ENCODE measurements at regions of chr3 and their contacts with region 1.

Region 1: DNA sequence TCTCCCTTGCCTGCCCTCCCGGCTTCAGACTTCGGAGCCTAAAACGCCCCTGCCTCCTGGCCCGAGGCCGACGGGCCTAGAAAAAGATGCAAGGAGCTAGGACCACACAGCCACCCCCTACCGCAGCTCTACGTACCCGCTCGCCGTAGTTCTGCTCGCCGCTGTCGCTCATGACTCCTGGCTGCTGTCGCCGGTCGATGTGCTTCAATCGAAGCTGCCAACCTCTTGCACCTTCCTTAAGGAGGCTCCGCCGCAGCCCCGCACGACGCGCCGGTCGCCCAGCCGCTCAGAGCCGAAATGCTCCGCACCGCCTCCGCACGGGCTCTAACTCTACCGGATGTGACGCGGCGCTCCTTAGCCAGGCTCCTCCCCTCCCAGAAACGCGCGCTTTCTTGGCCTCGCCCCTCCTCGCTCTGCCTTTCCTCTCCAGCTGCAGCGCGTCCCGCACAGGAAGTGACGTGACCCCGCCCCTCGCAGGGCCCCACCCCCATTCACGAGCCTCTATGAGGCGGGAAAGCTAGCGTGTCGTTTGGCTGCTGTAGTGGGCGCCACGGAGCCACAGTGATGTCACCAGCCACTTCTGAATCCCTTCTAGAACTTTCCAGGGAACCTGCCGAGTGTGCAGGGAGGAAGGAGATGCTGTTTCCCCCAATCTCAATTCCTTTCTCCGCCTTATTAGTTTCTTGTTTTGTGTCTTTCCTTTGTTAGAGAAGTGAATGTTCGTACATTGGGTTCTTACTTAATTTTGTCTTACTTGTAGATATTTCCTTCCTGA is at the start of gene TRA2B:
- DNase-seq: peak; percentile 99 to 100
- ATAC-seq: peak; percentile 96 to 98 (median 98)
- H3K4me3 ChIP-seq: peak within 1 kb of the TSS; percentile 99
- H3K27ac ChIP-seq: peak within 1 kb of the TSS; percentile 100
- H3K4me1 ChIP-seq: peaks cover 24% of the 10 kb centered on the region
- H3K27me3 ChIP-seq: no peaks in the 10 kb centered on the region
- CTCF ChIP-seq: peak; percentile 29
- total RNA-seq, gene TRA2B: 38.7 to 99.5 (median 68.8) TPM

Region 2: GRCh38 chr3:185852635-185853034 is 85.2 kb before region 1 on chr3:
- intact Hi-C with region 1: no loop called
- DNase-seq: no peak
- ATAC-seq: no peak
- H3K4me3 ChIP-seq: no peak overlapping the region
- H3K27ac ChIP-seq: no peak overlapping the region
- H3K4me1 ChIP-seq: no peaks in the 10 kb centered on the region
- H3K27me3 ChIP-seq: peaks cover 0 to 8% (median 2%) of the 10 kb centered on the region in 3 donors
- CTCF ChIP-seq: no peak

Region 3: GRCh38 chr3:186476044-186476468 is 538.2 kb after region 1 on chr3:
- intact Hi-C with region 1: no loop called
- DNase-seq: no peak
- ATAC-seq: no peak
- H3K4me3 ChIP-seq: no peak overlapping the region
- H3K27ac ChIP-seq: no peak overlapping the region
- H3K4me1 ChIP-seq: no peaks in the 10 kb centered on the region
- H3K27me3 ChIP-seq: no peaks in the 10 kb centered on the region
- CTCF ChIP-seq: no peak

Region 4: DNA sequence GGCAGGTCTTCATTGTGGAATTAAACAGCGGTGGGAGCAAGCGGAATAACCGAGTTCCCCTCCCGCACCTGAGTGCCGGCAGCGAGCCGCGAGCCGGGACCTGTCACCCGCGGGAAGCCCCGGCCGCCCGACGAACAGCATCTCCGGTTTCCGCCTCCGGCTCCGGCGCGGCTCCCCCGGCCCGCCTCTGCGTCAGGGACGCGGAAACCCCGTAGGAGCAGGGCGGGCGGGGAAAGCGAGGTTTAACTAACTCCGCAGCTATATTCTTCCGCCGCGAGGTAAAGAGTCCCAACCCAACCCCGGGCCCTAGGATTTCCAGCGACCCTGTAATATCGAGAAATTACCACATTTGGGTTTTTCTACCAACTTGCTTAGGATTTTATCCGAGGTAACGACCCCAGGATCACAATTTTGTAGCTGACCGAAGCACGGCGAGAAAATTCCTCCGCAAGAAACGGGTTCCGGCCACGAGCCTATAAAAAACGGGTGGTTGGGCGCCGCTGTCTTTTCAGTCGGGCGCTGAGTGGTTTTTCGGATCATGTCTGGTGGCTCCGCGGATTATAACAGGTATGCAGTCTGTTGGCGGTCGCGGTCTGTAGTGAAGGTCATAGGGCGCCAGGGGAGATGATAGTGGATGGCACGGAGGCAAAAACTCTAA is 845.3 kb after region 1 on chr3 and contains the start of gene EIF4A2:
- intact Hi-C with region 1: loop called in 1 of 2 experiments (anchors 5 kb)
- DNase-seq: peak; percentile 93 to 94
- ATAC-seq: peak; percentile 87 to 90 (median 88)
- H3K4me3 ChIP-seq: peak within 1 kb of the TSS; percentile 93
- H3K27ac ChIP-seq: peak within 1 kb of the TSS; percentile 98
- H3K4me1 ChIP-seq: peaks cover 38% of the 10 kb centered on the region
- H3K27me3 ChIP-seq: no peaks in the 10 kb centered on the region
- CTCF ChIP-seq: no peak
- total RNA-seq, gene EIF4A2: 541 to 778 (median 587) TPM